Activated CD4-positive, alpha-beta T cell treated with anti-CD3 and anti-CD28 coated beads, Interleukin-2, amount 10 ng/mL, durations not matched to agents 24 days and 14 days (primary cell): ENCODE measurements at regions of chr10 and their contacts with region 1.

Region 1: DNA sequence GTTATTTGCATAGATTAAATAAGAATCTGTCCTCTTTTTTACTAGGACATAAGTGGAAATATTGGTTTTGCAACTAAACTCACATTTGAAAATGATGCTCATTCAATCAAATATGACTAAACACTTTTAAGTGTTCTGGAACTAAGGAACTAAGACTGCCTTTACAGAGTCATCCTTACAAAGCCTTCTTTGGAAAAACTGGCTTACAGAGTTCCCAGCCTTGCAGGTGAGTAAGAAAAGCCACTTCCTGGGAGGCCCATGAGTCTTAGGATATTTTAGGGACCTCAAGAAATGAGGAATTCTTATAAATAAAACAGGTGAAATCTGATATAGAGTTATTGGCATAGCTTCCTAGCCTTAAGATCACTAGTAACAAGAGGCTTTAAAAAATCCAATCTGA is 135.5 kb downstream of the ALOX5 start:
- DNase-seq: no peak
- H3K4me3 Mint-ChIP-seq: no peak overlapping the region
- H3K27ac Mint-ChIP-seq: no peak overlapping the region
- H3K4me1 Mint-ChIP-seq: no peaks in the 10 kb centered on the region
- H3K27me3 Mint-ChIP-seq: no peaks in the 10 kb centered on the region

Region 2: DNA sequence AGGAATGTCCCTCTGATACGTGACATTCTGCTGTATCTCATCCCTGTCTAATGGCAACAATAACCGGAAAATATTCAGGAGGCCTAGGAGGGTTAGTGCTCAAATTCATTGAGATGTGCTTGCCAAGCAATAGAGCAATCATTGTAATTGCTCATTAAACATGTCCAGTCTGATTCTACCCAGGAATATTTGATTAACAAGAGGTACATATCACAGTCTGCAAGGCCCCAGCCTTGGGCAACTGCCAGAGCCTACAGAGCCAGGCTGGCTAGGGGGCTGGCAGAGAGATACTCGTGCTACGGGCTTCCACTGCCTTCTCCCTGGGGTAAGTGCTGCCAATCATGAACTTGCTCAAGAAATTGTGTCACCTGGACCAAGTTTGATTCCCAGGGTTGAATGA is 36.4 kb before region 1 on chr10:
- intact Hi-C with region 1: loop called (anchors 1 kb)
- DNase-seq: no peak
- H3K4me3 Mint-ChIP-seq: no peak overlapping the region
- H3K27ac Mint-ChIP-seq: no peak overlapping the region
- H3K4me1 Mint-ChIP-seq: peaks cover 13% of the 10 kb centered on the region
- H3K27me3 Mint-ChIP-seq: peaks cover 2% of the 10 kb centered on the region